ENCODE measurements at regions of chr6 and their contacts with region 1.

Region 1: DNA sequence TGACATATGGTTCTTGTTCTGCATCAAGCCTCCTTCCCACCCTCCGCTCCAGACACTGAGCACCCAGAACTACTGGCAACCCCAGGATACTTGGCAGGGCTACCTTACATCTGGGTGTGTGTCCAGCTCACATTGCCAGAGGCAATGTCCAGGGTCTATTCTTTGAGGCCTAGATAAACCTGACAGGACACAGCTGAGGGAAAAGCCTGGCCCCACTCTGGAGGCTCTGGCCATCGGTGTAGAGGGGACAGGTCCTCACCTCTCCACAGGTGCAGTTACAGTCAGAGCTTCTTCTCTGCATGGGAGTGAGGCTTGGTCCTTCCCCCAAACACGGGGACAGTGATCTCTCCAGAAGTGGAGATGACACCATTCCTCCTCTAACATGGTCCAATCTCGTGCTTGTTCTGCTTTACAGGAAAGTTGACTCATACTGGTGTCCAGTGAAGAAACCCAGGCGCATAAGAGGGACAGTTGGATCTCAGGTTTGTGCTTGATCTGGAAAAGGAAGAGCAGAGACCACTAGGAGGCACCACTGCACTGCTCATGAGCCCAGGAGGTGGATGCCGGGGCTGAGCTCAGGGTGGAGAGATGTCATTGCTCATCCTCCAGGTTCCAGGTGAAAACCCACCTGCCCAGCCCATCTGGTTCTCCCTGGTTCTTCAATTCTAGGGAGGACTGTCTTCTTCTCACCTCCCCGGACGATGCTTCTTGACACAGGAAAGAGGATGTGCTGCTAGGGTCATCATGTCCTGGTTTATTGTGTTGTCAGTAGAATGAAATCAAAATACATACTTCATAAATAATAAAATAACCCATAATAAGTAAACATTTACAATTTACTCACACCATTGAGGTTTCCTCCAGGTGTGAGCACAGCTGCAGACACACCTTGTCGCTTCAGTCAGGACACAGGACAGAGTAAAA is 14.7 kb downstream of the HLA-F start:
- DNase-seq: peak; percentile 48 to 87 (median 68)
- ATAC-seq: peak; percentile 92 to 95
- H3K4me3 Mint-ChIP-seq: no peak overlapping the region
- H3K27ac Mint-ChIP-seq: peak overlapping the region in 1 of 10 donors; percentile 25
- H3K4me1 Mint-ChIP-seq: peaks cover 3 to 25% (median 18%) of the 10 kb centered on the region in 4 donors
- H3K27me3 Mint-ChIP-seq: no peaks in the 10 kb centered on the region

Region 2: DNA sequence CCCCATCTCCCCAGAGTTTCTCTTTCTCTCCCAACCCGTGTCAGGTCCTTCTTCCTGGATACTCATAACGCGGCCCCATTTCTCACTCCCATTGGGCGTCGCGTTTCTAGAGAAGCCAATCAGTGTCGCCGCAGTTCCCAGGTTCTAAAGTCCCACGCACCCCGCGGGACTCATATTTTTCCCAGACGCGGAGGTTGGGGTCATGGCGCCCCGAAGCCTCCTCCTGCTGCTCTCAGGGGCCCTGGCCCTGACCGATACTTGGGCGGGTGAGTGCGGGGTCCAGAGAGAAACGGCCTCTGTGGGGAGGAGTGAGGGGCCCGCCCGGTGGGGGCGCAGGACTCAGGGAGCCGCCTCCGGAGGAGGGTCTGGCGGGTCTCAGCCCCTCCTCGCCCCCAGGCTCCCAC is 14.7 kb before region 1 on chr6 and contains the start of gene HLA-F:
- POLR2A ChIA-PET with region 1: interaction called, 39 read pairs
- DNase-seq: peak; percentile 65 to 94 (median 86)
- ATAC-seq: peak; percentile 83 to 84
- H3K4me3 Mint-ChIP-seq: peak within 1 kb of the TSS; percentile 92 to 98 (median 98)
- H3K27ac Mint-ChIP-seq: peak within 1 kb of the TSS; percentile 91 to 100 (median 98)
- H3K4me1 Mint-ChIP-seq: peaks cover 33 to 56% (median 53%) of the 10 kb centered on the region in 4 donors
- H3K27me3 Mint-ChIP-seq: no peaks in the 10 kb centered on the region
- polyA plus RNA-seq, gene HLA-F: 457 to 626 (median 619) TPM

Region 3: DNA sequence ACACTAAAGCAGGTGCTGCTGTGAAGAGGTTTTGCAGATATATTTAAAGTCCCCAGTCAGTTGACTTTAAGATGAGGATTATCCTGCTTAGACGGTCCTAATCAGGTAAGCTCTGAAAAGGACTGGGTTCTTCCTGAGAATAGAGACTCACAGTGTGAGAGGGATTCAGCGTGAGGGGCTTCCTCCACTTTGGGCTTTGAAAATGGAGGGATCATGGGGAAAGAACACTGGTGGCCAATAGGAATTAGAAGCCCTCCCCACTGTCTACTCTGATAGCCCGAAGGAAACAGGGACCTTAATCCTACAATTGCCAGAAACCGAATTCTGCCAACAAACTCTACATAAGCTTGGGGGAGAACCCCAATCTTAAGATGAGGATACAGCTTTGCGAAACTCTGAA is 60.0 kb after region 1 on chr6:
- POLR2A ChIA-PET with region 1: no interaction called
- DNase-seq: no peak
- ATAC-seq: no peak
- H3K4me3 Mint-ChIP-seq: no peak overlapping the region
- H3K27ac Mint-ChIP-seq: no peak overlapping the region
- H3K4me1 Mint-ChIP-seq: peaks cover 5 to 9% (median 6%) of the 10 kb centered on the region in 4 donors
- H3K27me3 Mint-ChIP-seq: peaks cover 15 to 45% (median 18%) of the 10 kb centered on the region in 5 donors